Activated B cell treated with CpG ODN at 0.5 μM for 24 hours (primary cell): ENCODE measurements at regions of chr2 and their contacts with region 1.

Region 1: GRCh38 chr2:108351889-108352288 is 25.9 kb upstream of the SULT1C4 start:
- DNase-seq: no peak
- ATAC-seq: no peak
- H3K4me3 Mint-ChIP-seq: no peak overlapping the region
- H3K27ac Mint-ChIP-seq: no peak overlapping the region
- H3K4me1 Mint-ChIP-seq: no peaks in the 10 kb centered on the region
- H3K27me3 Mint-ChIP-seq: peaks cover 9% of the 10 kb centered on the region
- CTCF ChIP-seq: no peak

Region 2: DNA sequence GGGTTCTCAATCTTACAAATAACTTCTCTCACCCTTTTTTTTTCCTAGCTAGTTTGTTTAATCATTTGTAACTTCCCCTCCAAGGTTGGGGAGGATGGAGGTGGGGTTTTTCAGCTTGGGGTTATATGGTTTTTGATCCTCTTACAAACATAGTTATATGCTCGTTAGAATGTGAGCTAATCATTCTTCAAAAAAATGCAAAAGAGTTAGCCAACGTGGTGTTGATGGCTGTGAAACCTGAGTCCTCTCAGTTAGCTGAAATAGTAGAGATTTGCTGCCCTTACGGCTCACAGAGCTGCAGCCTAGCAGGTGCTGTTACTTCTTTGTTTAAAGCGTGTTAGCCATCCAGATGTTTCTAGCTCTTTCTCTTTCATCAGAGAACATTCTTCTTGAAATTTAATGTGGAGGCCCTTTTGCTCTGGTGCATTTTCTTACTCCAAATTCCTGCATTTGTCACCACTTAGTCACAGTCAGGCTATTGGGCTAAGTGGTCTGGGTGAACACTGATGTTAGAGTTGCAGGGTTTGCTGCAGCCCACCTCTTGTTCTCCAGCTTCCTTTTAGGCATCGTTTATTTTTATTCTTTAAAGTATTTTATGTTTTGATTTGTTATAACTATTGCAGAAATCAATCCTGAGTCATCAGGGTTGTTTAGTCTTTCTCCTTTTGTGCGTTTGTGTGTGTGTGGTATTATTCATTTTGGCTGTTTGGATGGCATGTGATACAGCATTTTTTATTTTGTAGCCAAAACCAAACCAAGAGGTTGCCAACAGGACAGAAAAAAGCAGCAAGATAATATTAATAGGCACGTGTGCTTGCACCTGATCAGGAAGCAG is 223.5 kb after region 1 on chr2:
- CTCF ChIA-PET with region 1: no interaction called
- POLR2A ChIA-PET with region 1: interaction called, 11 read pairs
- intact Hi-C with region 1: no loop called
- DNase-seq: no peak
- ATAC-seq: peak; percentile 77
- H3K4me3 Mint-ChIP-seq: peak overlapping the region; percentile 46
- H3K27ac Mint-ChIP-seq: peak overlapping the region; percentile 53
- H3K4me1 Mint-ChIP-seq: peaks cover 36% of the 10 kb centered on the region
- H3K27me3 Mint-ChIP-seq: no peaks in the 10 kb centered on the region
- CTCF ChIP-seq: no peak